Activated naive CD4-positive, alpha-beta T cell treated with anti-CD3 and anti-CD28 coated beads, Interleukin-2, amount 10 ng/mL, durations not matched to agents 7 days and 5 days (primary cell): ENCODE measurements at regions of chr19 and their contacts with region 1.

Region 1: DNA sequence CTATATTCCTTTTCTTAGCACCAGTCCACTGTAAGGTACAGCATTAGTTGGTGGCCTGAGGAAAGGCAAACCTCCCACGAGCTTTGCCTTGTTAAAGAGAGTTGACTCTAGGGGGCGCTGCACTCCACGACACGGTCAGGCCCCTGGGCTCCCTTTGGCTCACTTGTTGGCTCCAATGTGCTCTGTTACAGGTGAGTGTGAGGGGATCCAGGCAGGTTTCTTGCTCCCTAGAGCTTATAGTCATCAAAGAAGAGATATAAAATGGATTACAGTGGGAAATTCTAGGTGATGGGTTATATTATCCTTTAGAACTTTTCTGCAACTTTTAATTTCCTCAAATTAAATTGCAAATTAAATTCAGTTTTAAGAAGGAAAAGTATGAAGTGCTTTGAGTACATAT is 3.7 kb downstream of the WDR87 start:
- DNase-seq: peak; percentile 89
- H3K4me3 Mint-ChIP-seq: no peak overlapping the region
- H3K27ac Mint-ChIP-seq: no peak overlapping the region
- H3K4me1 Mint-ChIP-seq: peaks cover 15% of the 10 kb centered on the region
- H3K27me3 Mint-ChIP-seq: peaks cover 18% of the 10 kb centered on the region

Region 2: DNA sequence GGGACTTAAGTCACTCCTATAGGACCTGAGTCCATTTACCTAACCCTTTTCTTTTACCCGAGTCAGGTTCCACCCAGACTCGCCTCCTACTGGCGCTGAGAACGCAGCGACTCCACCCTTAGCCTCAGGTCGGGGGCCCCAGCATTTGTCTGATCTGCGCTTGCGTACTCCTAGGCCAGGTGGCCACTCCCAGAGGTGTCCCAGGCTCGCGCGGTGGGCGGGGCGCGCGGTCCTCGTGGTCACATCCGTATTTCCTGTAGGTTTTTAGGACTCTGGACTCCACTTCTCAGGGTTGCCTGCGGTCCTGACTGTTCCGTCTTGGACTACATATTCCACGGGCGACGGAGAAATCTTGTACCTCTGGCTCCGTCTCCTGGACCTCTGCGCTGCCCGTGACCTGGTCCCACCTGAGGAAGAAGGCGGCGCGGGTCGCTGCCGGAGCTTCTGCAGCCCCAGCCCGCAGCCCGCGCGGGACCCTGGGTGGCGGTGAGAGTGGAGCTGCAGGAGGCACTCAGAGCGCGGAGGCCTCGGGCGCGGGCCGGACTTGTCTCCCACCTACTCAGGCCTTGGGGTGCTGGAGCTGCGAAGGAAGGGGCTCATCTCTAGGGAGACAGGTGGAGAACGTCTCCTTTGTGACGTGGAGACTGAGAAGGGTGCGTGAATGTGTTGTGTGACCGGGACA is 112.3 kb before region 1 on chr19:
- CTCF ChIA-PET with region 1: no interaction called
- DNase-seq: no peak
- H3K4me3 Mint-ChIP-seq: no peak overlapping the region
- H3K27ac Mint-ChIP-seq: peak overlapping the region; percentile 28
- H3K4me1 Mint-ChIP-seq: no peaks in the 10 kb centered on the region
- H3K27me3 Mint-ChIP-seq: no peaks in the 10 kb centered on the region

Region 3: DNA sequence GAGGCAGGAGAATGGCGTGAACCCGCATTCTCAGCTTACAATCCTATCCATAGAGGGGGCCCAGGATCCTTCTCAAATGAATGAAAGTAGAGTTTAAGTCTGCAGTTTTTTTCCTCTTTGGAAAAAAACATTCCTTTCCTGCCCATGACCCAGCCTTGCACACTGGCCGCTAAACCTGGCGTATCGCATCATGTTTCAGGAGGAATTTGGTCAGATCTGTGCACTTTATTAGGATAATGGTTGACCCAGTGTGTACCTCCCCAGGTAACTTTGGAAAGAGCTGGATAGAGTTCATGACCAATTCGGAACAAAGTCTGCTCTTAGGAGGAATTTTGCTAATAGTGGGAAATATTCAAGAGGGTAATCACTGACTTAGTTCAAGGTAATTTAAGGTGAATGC is 50.5 kb after region 1 on chr19:
- CTCF ChIA-PET with region 1: no interaction called
- DNase-seq: no peak
- H3K4me3 Mint-ChIP-seq: no peak overlapping the region
- H3K27ac Mint-ChIP-seq: no peak overlapping the region
- H3K4me1 Mint-ChIP-seq: no peaks in the 10 kb centered on the region
- H3K27me3 Mint-ChIP-seq: no peaks in the 10 kb centered on the region

Region 4: GRCh38 chr19:37963190-37963936 is 60.7 kb after region 1 on chr19:
- CTCF ChIA-PET with region 1: no interaction called
- DNase-seq: no peak
- H3K4me3 Mint-ChIP-seq: no peak overlapping the region
- H3K27ac Mint-ChIP-seq: no peak overlapping the region
- H3K4me1 Mint-ChIP-seq: peaks cover 3% of the 10 kb centered on the region
- H3K27me3 Mint-ChIP-seq: no peaks in the 10 kb centered on the region

Region 5: DNA sequence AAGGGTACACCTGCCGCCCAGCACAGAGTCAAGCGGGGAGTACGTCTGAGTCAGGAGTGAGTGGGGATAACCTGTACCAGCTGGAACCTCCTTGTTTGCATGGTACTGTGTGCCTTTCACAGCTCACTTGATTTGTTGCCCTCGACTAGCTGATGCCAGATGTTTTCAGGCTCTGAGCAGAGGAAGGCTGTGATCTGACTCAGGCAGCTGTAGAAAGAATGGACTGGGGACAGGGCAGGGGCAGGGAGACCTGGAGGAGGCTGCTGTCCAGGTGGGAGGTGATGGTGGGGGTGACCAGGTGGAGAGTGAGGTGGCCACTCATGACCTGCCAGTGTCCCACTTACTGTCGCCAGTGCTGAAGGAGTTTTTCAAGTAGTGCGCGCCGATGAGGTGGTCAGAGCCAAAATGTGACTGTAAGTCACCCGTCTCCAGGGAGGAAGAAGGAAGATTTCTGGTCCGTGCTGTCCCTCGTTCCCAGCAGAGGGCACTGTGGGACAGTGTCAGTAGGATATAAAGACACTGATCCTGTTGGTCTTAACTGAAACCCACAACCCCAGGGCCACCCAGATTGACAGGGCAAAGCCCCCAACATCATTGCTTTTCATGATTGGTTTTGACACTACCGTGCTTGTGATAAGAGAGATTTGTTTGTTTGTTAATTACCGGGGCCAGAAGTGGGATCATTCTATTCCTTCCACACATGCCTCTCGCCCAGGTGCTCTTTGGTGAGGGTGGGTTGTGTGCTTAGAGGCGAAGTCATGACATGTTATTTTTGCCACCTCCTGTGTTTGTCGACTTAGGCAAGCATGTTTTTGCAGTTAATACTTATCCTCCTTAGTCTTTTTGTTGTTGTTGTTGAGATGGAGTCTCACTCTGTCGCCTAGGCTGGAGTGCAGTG is 193.0 kb after region 1 on chr19:
- CTCF ChIA-PET with region 1: interaction called, 18 read pairs
- DNase-seq: peak; percentile 76
- H3K4me3 Mint-ChIP-seq: no peak overlapping the region
- H3K27ac Mint-ChIP-seq: no peak overlapping the region
- H3K4me1 Mint-ChIP-seq: no peaks in the 10 kb centered on the region
- H3K27me3 Mint-ChIP-seq: no peaks in the 10 kb centered on the region

Region 6: DNA sequence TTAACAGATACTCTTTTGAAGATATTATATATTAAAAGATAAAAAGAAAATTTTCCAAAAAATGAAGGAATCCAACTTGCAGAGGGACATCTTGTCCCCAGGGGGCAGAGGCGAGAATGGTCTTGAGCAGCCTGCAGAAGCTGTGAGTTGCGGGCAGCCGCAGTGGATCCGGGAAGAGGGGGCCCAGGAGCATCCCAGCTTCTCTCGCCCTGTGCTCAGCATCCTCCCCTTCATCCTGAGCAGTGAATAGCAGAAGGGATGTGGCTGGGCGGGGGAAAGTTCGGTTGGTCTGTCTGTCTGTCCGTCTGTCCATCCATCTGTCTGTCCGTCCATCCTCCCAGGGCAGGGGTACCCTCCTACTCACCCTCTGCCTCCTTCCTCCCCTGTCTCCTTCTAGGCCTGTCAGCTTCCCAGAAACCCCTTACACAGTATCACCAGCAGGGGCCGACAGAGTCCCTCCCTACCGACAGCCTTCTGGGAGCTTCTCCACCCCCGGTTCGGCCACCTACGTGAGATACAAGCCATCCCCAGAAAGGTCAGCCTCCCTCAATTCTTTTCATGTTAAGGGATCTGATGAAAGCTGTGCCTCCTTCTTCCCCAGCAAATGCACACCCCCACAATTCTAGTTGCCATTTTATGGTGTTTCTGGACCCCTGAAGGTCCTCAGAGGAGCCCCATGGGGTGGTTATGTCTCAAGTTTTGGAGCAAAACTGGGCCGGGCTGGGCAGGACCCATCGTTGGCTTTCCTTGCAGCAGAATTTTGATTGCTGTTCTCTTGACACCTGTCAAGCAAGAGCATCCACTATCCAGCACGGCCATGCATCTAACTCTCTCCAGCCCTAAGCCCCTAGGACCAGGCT is 239.7 kb after region 1 on chr19:
- CTCF ChIA-PET with region 1: interaction called, 31 read pairs
- DNase-seq: peak; percentile 58
- H3K4me3 Mint-ChIP-seq: no peak overlapping the region
- H3K27ac Mint-ChIP-seq: no peak overlapping the region
- H3K4me1 Mint-ChIP-seq: peaks cover 2% of the 10 kb centered on the region
- H3K27me3 Mint-ChIP-seq: no peaks in the 10 kb centered on the region

Region 7: GRCh38 chr19:38224014-38224862 is 321.6 kb after region 1 on chr19 and contains the start of gene DPF1:
- CTCF ChIA-PET with region 1: interaction called, 24 read pairs
- DNase-seq: peak; percentile 68
- H3K4me3 Mint-ChIP-seq: peak within 1 kb of the TSS; percentile 71
- H3K27ac Mint-ChIP-seq: peak within 1 kb of the TSS; percentile 3
- H3K4me1 Mint-ChIP-seq: peaks cover 30% of the 10 kb centered on the region
- H3K27me3 Mint-ChIP-seq: peaks cover 96% of the 10 kb centered on the region